ENCODE measurements at regions of chr2 and their contacts with region 1.

Region 1: DNA sequence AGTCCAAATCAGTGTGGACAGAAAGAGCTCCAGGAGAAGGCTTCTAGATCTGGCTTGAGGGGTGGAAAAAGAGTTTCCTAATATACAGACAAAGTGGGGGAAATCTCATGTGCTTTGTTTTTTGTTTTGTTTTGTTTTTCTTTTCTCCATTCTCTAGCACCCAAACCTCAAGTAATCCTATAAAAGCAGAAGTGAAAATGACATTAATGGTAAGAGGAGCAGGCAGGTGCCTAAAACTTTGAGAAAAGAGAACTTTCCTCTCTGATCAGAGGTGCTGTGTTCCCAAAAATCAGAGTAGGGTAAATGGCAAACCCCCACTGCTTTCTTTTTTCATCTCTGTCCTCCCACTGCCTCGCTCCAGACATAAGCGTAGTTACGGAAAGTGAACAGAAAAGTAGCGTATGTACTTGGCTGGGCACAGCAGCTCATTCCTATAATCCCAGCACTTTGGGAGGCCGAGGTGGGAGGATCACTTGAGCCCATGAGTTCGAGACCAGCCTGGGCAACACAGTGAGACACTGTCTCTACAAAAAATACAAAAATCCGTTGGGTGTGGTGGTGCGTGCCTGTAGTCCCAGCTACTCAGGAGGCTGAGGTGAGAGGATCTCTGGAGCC is 77.8 kb downstream of the FAM161A start:
- DNase-seq: no peak
- H3K4me3 ChIP-seq: no peak overlapping the region
- H3K27ac ChIP-seq: peak overlapping the region in 5 of 8 donors; percentile 31 to 66 (median 53)
- H3K4me1 ChIP-seq: peaks cover 0 to 27% (median 6%) of the 10 kb centered on the region in 6 donors
- H3K27me3 ChIP-seq: no peaks in the 10 kb centered on the region
- CTCF ChIP-seq: no peak
- POLR2A ChIP-seq: no peak

Region 2: GRCh38 chr2:61543062-61543461 is 233.0 kb before region 1 on chr2:
- intact Hi-C with region 1: loop called (anchors 10 kb)
- DNase-seq: no peak
- H3K4me3 ChIP-seq: no peak overlapping the region
- H3K27ac ChIP-seq: no peak overlapping the region
- H3K4me1 ChIP-seq: peaks cover 4 to 10% (median 7%) of the 10 kb centered on the region in 6 donors
- H3K27me3 ChIP-seq: no peaks in the 10 kb centered on the region
- CTCF ChIP-seq: no peak
- POLR2A ChIP-seq: no peak

Region 3: GRCh38 chr2:61679096-61679495 is 97.0 kb before region 1 on chr2:
- intact Hi-C with region 1: no loop called
- DNase-seq: no peak
- H3K4me3 ChIP-seq: no peak overlapping the region
- H3K27ac ChIP-seq: no peak overlapping the region
- H3K4me1 ChIP-seq: no peaks in the 10 kb centered on the region
- H3K27me3 ChIP-seq: no peaks in the 10 kb centered on the region
- CTCF ChIP-seq: no peak
- POLR2A ChIP-seq: no peak